Lower leg skin (tissue), 4 donors: ENCODE measurements at regions of chr11 and their contacts with region 1.

Region 1: GRCh38 chr11:93817426-93818348 is 32.7 kb downstream of the VSTM5 start:
- DNase-seq: no peak
- H3K4me3 ChIP-seq: no peak overlapping the region
- CTCF ChIP-seq: no peak
- POLR2A ChIP-seq: no peak

Region 2: GRCh38 chr11:93791493-93791892 is 26.2 kb before region 1 on chr11:
- intact Hi-C with region 1: loop called (anchors 1 kb)
- DNase-seq: no peak
- H3K4me3 ChIP-seq: no peak overlapping the region
- CTCF ChIP-seq: no peak
- POLR2A ChIP-seq: no peak